ENCODE measurements at regions of chr20 and their contacts with region 1.

Region 1: DNA sequence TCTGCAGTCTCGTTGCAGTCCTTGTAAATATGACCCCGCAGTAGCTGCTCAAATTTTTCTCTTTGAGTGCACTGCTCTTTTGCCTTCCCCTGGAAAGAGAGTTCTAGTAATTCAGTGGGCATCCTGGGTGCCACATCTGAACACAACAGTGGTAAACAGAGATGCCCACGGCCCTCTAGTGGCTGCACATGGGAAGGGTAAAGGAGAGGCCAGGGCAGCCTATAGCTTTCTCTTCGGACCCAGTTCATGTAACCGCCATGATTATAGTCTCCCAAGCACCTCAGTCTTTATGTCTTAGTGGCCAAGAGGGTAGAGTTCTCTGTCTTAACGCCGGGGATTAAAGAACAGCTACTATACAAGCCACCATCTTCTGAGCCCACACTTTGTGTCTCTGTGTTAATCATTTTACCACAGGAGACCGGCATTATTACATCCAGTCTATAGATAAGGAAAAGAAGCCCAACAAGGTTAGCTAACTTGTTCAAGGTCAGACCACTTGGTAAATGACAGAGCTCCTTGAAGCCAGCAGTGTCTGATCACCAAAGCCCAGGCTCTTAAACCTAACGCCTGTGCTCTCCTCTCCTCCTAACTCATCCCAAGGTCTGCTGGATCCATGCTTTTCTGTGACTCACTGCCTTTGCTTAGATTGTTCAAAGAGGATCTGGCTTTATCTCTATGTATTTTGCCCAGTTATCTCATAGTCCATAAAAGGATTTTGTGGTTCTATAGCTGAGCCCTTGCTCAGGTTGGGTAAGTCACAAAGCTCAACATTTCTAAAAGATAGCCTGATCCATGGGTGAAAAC is 81.8 kb downstream of the ISM1 start:
- DNase-seq: no peak
- ATAC-seq: peak in 5 of 8 donors; percentile 41 to 61 (median 50)
- H3K4me3 ChIP-seq: no peak overlapping the region
- H3K27ac ChIP-seq: no peak overlapping the region
- H3K4me1 ChIP-seq: no peaks in the 10 kb centered on the region
- H3K27me3 ChIP-seq: no peaks in the 10 kb centered on the region
- CTCF ChIP-seq: peak; percentile 44 to 70 (median 59)

Region 2: DNA sequence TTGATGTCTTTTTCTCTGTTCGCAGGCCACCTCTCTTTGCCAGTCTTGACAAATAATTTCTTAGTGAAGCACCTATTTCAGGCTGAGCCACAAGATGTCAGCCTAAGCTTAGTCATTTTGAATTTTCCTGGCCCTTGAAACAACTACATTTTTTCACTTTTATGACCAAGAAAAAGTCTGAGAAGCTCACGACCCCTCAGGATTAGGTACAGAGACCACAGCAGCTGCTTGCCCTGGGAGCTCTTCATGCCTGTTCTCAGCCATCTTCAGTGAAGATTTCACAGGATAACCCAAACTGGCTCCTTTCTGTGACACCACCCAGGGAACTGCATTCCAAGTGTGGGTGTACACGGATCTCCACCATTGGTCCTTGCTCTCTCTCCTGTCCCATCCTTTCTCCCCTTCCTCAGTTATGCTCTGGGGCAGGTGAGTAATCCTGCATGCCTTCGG is 332.5 kb before region 1 on chr20:
- intact Hi-C with region 1: loop called in 1 of 10 experiments (anchors 5 kb)
- DNase-seq: peak in 1 of 2 donors; percentile 6
- ATAC-seq: peak in 4 of 8 donors; percentile 38 to 54 (median 43)
- H3K4me3 ChIP-seq: no peak overlapping the region
- H3K27ac ChIP-seq: no peak overlapping the region
- H3K4me1 ChIP-seq: no peaks in the 10 kb centered on the region
- H3K27me3 ChIP-seq: no peaks in the 10 kb centered on the region
- CTCF ChIP-seq: peak in 8 of 9 donors; percentile 18 to 71 (median 61)

Region 3: DNA sequence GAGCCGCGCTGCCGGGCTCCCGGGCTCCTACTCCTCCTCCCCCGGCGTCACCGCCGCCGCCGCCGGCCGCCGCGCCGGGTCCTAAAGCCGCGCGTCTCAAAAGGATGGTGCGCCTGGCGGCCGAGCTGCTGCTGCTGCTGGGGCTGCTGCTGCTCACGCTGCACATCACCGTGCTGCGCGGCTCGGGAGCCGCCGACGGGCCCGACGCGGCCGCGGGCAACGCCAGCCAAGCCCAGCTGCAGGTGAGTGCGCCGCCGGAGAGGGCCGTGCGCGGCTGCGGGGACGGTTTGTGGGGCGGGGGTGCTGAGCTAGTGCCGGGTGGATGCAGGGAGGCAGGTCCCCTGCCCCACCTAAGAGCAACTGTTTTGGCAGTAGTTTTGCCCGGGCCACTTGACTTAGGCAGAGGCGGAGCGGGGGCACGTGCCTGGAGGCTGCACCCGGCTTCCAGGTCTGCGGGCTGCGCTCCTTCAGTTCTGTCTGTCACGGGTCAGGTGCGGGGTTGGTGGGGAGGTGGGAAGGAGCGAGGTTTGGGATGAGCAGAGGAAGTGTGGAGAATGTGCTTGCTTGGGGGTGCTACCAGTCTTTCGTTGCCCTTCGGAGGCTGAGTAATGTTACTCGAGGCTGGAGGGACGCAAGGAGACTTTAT is 81.1 kb before region 1 on chr20:
- intact Hi-C with region 1: loop called in 1 of 10 experiments (anchors 10 kb)
- DNase-seq: peak in 1 of 2 donors; percentile 39
- ATAC-seq: peak; percentile 36 to 86 (median 64)
- H3K4me3 ChIP-seq: peak overlapping the region; percentile 30 to 68 (median 53)
- H3K27ac ChIP-seq: peak overlapping the region in 7 of 10 donors; percentile 35 to 73 (median 50)
- H3K4me1 ChIP-seq: peaks cover 5 to 31% (median 17%) of the 10 kb centered on the region in 9 donors
- H3K27me3 ChIP-seq: peaks cover 3 to 72% (median 44%) of the 10 kb centered on the region in 7 donors
- CTCF ChIP-seq: no peak

Region 4: DNA sequence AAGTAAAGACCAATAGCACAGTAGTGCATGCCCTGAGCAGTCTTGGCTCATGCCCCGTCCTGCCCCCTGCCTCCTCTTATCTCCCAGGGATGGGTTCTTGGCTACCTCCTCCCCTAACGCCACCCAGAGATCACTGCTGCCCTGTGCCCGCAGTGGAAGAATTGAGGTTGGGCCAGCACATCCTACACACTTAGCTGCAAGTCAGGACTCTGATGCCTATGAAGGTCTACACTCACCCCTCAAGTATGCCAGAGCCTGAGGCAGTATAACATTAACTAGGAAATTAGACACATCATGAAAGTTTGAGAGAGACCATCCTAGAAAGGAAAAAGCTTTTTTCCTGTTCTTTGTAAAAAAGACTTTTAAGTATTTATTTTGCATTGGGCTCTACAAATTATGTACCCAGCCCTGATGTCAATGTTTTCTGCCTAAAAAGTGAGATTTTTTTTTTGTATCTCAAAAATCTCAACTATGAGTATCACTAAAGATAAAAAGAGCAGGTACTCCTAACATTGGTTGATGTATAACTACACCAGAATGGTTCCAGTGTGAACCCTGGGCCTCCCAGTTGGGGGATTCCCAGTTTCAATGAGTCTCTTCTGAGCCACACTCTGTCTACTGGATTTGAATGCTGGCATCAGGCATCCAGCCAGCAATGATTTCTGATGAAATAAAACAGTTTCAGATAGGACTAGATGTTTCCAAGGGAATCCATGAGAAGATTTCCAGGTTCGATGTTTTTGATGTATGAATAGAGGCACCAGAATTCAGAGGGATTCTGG is 33.6 kb after region 1 on chr20:
- intact Hi-C with region 1: no loop called
- DNase-seq: no peak
- ATAC-seq: no peak
- H3K4me3 ChIP-seq: no peak overlapping the region
- H3K27ac ChIP-seq: no peak overlapping the region
- H3K4me1 ChIP-seq: no peaks in the 10 kb centered on the region
- H3K27me3 ChIP-seq: no peaks in the 10 kb centered on the region
- CTCF ChIP-seq: no peak

Region 5: GRCh38 chr20:13355411-13355810 is 52.6 kb after region 1 on chr20:
- intact Hi-C with region 1: loop called in 1 of 10 experiments (anchors 10 kb)
- DNase-seq: no peak
- ATAC-seq: no peak
- H3K4me3 ChIP-seq: no peak overlapping the region
- H3K27ac ChIP-seq: no peak overlapping the region
- H3K4me1 ChIP-seq: no peaks in the 10 kb centered on the region
- H3K27me3 ChIP-seq: no peaks in the 10 kb centered on the region
- CTCF ChIP-seq: no peak

Region 6: DNA sequence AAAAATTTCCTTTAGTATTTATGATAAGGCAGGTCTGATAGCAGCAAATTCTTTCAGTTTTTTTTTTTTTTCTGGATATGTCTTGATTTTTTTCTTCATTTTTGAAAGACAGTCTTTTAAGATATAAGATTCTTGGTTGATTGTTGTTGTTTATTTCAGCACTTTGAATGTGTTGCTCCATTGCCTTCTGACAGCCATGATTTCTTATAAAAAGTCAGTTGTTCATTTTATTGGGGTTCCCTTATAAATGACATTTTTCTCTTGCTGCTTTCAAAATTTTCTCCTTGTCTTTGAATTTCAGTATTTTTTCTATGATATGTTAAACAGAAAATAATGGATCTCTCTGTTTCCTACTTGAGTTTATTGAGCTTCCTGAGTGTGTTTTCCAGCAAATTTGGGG is 70.6 kb after region 1 on chr20:
- intact Hi-C with region 1: no loop called
- DNase-seq: no peak
- ATAC-seq: no peak
- H3K4me3 ChIP-seq: no peak overlapping the region
- H3K27ac ChIP-seq: no peak overlapping the region
- H3K4me1 ChIP-seq: no peaks in the 10 kb centered on the region
- H3K27me3 ChIP-seq: no peaks in the 10 kb centered on the region
- CTCF ChIP-seq: no peak

Measured in heart right ventricle (tissue), 16 donors.